GM13977 (cell line): ENCODE measurements at regions of chr9 and their contacts with region 1.

Region 1: GRCh38 chr9:14353222-14354056 is 39.5 kb upstream of the NFIB start:
- DNase-seq: peak; percentile 79
- CTCF ChIP-seq: peak; percentile 93

Region 2: GRCh38 chr9:13427587-13427986 is 925.9 kb before region 1 on chr9:
- in situ Hi-C with region 1: loop called (anchors 10 kb)
- DNase-seq: peak; percentile 37
- CTCF ChIP-seq: peak; percentile 71